CD4-positive, alpha-beta T cell (primary cell): ENCODE measurements at regions of chr11 and their contacts with region 1.

Region 1: GRCh38 chr11:67409261-67409666 is 5.4 kb downstream of the TBC1D10C start:
- DNase-seq: peak in 13 of 14 experiments; percentile 45 to 92 (median 76)
- ATAC-seq: peak; percentile 62
- H3K4me3 ChIP-seq: peak overlapping the region; percentile 100
- H3K4me3 Mint-ChIP-seq: peak overlapping the region; percentile 88
- H3K27ac ChIP-seq: peak overlapping the region; percentile 75 to 84
- H3K27ac Mint-ChIP-seq: peak overlapping the region; percentile 98
- H3K4me1 ChIP-seq: peaks cover 98% of the 10 kb centered on the region
- H3K4me1 Mint-ChIP-seq: peaks cover 91% of the 10 kb centered on the region
- H3K27me3 ChIP-seq: no peaks in the 10 kb centered on the region
- H3K27me3 Mint-ChIP-seq: no peaks in the 10 kb centered on the region
- CTCF ChIP-seq: no peak

Region 2: DNA sequence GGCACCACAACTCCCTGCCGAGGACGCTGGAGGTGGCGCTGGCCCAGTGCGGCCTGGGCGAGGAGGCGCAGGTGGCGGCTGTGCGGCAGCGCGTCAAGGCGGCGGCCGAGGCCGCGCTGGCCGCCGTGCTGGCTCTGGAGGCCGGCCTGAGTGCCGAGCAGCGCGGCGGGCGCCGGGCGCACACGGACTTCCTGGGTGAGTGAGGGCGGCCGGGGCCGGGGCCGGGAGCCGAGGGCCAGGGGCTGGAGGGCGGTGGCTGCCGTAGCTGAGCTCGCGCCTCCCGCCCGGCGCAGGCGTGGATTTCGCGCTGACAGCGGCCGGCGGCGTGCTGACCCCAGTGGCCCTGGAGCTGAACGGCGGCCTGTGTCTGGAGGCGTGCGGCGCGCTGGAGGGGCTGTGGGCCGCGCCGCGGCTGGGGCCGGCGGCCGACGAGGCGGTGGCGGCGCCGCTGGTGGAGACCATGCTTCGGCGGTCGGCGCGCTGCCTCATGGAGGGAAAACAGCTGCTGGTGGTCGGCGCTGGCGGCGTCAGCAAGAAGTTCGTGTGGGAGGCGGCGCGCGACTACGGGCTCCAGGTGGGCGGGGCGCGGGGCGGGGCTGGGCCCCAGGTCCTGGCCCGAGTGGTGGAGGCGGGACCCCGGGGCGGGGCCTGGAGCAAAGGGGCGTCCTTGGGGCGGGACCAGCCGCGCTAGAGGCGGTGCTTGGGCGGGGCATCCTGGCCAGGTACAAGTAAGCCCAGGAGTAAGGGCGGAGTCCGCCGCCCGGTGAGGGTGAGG is 11.6 kb after region 1 on chr11:
- CTCF ChIA-PET with region 1: interaction called, 46 read pairs
- POLR2A ChIA-PET with region 1: interaction called, 411 read pairs
- intact Hi-C with region 1: loop called in 1 of 2 experiments (anchors 2 kb)
- DNase-seq: peak; percentile 97 to 100 (median 99)
- ATAC-seq: peak; percentile 79
- H3K4me3 ChIP-seq: peak overlapping the region; percentile 50
- H3K4me3 Mint-ChIP-seq: peak overlapping the region; percentile 86
- H3K27ac ChIP-seq: peak overlapping the region; percentile 15 to 79
- H3K27ac Mint-ChIP-seq: peak overlapping the region; percentile 94
- H3K4me1 ChIP-seq: peaks cover 57% of the 10 kb centered on the region
- H3K4me1 Mint-ChIP-seq: peaks cover 56% of the 10 kb centered on the region
- H3K27me3 ChIP-seq: no peaks in the 10 kb centered on the region
- H3K27me3 Mint-ChIP-seq: no peaks in the 10 kb centered on the region
- CTCF ChIP-seq: no peak

Region 3: DNA sequence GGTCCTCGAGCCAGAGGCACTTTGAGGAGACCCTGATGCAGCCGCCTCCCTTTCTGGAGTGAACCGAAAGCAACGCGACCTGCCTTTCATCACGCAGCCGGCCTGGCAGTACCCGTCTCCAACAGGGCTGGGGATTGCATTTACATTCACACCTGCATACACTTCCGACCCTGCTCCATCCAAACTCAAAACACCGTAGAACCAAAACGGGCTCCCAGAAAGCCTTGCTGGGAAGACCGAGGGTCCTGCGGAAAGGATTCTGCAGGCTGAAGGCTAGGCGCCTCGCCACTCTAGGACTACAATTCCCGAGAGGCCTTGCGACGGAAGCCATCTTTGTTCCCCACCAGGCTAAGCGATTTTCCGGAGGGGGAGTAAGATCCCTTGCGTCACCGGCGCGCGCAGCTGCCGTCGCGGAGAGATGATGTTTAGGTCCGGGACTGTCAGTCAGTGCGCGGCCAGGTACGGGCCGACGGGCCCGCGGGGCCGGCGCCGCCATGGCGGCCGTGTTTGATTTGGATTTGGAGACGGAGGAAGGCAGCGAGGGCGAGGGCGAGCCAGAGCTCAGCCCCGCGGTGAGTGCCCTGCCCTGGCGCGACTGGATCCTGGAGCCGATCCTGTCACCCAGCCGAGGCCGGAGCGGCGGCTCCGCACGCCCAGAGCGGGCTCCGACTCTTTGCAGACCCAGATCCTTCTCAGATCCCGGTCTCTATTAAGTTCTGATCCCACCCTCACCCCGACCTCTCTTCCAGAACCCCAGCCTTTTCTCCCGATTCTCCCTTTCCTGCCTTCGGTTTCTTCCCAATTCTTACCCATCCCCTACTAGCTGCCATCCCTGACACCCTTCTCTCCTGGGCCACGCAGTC is 19.0 kb after region 1 on chr11 and contains the start of gene RPS6KB2:
- CTCF ChIA-PET with region 1: interaction called, 3 read pairs
- POLR2A ChIA-PET with region 1: interaction called, 411 read pairs
- intact Hi-C with region 1: no loop called
- DNase-seq: peak; percentile 96 to 100 (median 99)
- ATAC-seq: peak; percentile 84
- H3K4me3 ChIP-seq: peak within 1 kb of the TSS; percentile 92
- H3K4me3 Mint-ChIP-seq: peak within 1 kb of the TSS; percentile 98
- H3K27ac ChIP-seq: peak within 1 kb of the TSS; percentile 85 to 86
- H3K27ac Mint-ChIP-seq: peak within 1 kb of the TSS; percentile 96
- H3K4me1 ChIP-seq: peaks cover 59% of the 10 kb centered on the region
- H3K4me1 Mint-ChIP-seq: peaks cover 33% of the 10 kb centered on the region
- H3K27me3 ChIP-seq: no peaks in the 10 kb centered on the region
- H3K27me3 Mint-ChIP-seq: no peaks in the 10 kb centered on the region
- CTCF ChIP-seq: no peak
- total RNA-seq, gene RPS6KB2: 69.3 to 72.0 TPM